ENCODE measurements at regions of chr6 and their contacts with region 1.

Region 1: GRCh38 chr6:31862344-31863227 is at the start of gene NEU1:
- DNase-seq: peak; percentile 100
- H3K4me3 Mint-ChIP-seq: peak within 1 kb of the TSS; percentile 97
- H3K27ac Mint-ChIP-seq: peak within 1 kb of the TSS; percentile 93
- H3K4me1 Mint-ChIP-seq: peaks cover 13% of the 10 kb centered on the region
- H3K27me3 Mint-ChIP-seq: no peaks in the 10 kb centered on the region
- total RNA-seq, gene NEU1: 21.3 and 21.6 TPM in 2 replicates

Region 2: GRCh38 chr6:31619805-31620585 is 242.6 kb before region 1 on chr6:
- intact Hi-C with region 1: loop called (anchors 1 kb)
- DNase-seq: peak; percentile 98
- H3K4me3 Mint-ChIP-seq: peak overlapping the region; percentile 81
- H3K27ac Mint-ChIP-seq: peak overlapping the region; percentile 94
- H3K4me1 Mint-ChIP-seq: peaks cover 39% of the 10 kb centered on the region
- H3K27me3 Mint-ChIP-seq: no peaks in the 10 kb centered on the region

Region 3: DNA sequence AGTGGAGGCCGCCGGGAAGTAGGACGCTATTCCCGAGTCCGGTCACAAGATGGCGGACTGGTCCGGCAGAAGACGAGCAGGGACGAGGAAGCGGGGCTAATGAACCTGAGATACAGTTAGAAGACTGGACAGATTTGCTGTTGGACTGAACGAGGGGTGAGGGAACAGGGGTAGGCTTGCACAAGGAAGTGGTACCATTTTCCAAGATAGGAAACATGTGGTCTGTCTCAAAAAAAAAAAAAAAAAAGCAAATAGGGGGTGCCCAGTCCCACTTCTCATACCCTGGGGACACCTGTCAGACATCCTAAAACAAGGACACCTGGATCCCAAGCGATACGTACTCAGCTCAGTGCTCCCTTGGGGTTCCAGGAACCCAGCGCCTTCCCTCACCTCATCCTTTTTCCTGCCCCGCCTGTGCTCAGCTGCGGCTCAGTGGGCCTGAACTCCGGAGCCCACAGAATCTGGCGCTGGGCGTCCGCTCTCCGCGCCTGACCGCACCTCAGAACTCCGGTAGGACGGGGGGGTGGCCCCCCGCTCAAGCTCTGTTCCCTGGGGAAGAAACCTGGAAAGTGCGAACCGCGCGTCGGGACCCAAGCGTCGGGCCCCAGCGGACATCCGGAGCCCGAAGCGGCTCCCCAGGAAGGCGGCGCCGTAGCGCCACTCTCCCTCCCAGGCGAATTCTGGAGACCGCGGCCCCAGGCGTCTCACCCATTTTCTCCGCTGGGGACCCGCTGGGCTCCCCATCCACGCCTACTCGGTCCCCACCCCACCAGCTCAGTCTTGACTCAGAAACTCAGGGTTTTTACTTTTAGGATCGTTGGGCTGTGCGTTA is 181.5 kb before region 1 on chr6 and contains the start of gene LY6G5C:
- intact Hi-C with region 1: loop called (anchors 1 kb)
- DNase-seq: peak; percentile 58
- H3K4me3 Mint-ChIP-seq: peak within 1 kb of the TSS; percentile 73
- H3K27ac Mint-ChIP-seq: peak within 1 kb of the TSS; percentile 64
- H3K4me1 Mint-ChIP-seq: peaks cover 21% of the 10 kb centered on the region
- H3K27me3 Mint-ChIP-seq: no peaks in the 10 kb centered on the region
- total RNA-seq, gene LY6G5C: 4.6 and 4.8 TPM in 2 replicates

Region 4: GRCh38 chr6:31822036-31822821 is 40.4 kb before region 1 on chr6:
- intact Hi-C with region 1: loop called (anchors 5 kb)
- DNase-seq: peak; percentile 56
- H3K4me3 Mint-ChIP-seq: peak overlapping the region; percentile 92
- H3K27ac Mint-ChIP-seq: peak overlapping the region; percentile 94
- H3K4me1 Mint-ChIP-seq: peaks cover 44% of the 10 kb centered on the region
- H3K27me3 Mint-ChIP-seq: no peaks in the 10 kb centered on the region

Region 5: DNA sequence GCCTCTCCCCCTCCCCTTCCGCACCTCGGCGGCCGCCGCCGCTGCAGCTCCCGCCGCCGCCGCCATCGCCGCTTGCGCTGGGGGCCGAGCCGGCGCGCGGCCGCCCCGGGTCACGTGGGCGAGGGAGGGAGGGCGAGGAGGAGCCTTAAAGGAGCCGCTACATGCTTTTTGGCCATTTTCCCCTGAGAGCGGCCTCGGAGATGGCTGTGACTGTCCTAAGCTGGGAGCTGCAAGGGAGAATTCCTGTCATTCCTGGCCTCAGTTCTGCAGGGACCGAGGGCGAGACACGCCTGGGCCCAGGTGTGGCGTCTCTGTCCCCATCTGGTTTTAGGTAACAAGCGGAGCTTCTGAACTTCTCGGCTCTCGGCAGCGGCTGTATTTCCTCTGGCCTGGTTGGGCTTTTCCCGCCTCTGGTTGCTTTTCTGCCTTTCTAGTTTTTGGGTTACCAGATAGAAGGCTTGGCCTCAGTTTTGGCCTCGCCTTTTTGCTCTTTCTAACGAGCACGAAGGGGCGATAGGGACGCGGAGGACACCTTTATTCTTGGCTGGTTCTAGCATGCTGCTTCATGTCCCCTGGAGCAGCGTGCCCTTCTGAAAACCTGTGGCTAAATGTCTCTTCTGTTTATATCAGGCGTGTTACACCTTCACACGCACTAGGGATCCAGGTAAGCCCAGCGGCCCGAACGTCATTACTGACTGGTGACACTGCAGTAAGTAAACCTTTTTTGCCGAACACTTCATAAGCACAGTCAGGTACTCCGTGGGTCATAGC is 35.2 kb after region 1 on chr6 and contains the start of gene EHMT2:
- intact Hi-C with region 1: loop called (anchors 2 kb)
- DNase-seq: peak; percentile 84
- H3K4me3 Mint-ChIP-seq: peak within 1 kb of the TSS; percentile 98
- H3K27ac Mint-ChIP-seq: peak within 1 kb of the TSS; percentile 92
- H3K4me1 Mint-ChIP-seq: peaks cover 31% of the 10 kb centered on the region
- H3K27me3 Mint-ChIP-seq: no peaks in the 10 kb centered on the region
- total RNA-seq, gene EHMT2: 76.3 and 76.5 TPM in 2 replicates

Region 6: DNA sequence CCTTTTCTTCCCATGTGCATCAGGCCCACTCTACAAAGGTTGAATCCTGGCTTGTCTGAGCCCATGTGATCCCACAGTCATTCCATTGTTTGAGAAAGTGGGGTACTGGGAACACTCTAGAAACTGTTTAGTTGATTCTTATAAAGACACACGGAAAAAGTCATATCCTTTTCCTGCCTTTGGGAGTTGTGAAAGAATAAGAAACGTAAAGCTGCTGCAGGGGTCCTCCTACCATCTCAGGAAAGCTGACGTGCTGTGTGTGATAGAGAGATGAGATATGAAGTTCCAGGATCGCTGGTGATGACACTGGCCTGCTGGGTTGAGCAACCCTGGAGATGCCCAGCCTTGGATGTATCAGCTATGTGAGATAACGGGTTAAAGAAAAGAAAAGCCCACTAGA is 688.8 kb after region 1 on chr6:
- intact Hi-C with region 1: no loop called
- DNase-seq: no peak
- H3K4me3 Mint-ChIP-seq: no peak overlapping the region
- H3K27ac Mint-ChIP-seq: no peak overlapping the region
- H3K4me1 Mint-ChIP-seq: peaks cover 3% of the 10 kb centered on the region
- H3K27me3 Mint-ChIP-seq: peaks cover 29% of the 10 kb centered on the region

Measured in activated T-helper 2 cell treated with anti-CD3 and anti-CD28 coated beads, Interferon-gamma antibody, Interleukin-2, Interleukin-4, amounts not matched to agents 10 μg/mL and 5 μg/mL and 100 μg/mL, durations not matched to agents 14 hours and 24 hours and 36 hours (primary cell).